ENCODE measurements at regions of chr15 and their contacts with region 1.

Region 1: DNA sequence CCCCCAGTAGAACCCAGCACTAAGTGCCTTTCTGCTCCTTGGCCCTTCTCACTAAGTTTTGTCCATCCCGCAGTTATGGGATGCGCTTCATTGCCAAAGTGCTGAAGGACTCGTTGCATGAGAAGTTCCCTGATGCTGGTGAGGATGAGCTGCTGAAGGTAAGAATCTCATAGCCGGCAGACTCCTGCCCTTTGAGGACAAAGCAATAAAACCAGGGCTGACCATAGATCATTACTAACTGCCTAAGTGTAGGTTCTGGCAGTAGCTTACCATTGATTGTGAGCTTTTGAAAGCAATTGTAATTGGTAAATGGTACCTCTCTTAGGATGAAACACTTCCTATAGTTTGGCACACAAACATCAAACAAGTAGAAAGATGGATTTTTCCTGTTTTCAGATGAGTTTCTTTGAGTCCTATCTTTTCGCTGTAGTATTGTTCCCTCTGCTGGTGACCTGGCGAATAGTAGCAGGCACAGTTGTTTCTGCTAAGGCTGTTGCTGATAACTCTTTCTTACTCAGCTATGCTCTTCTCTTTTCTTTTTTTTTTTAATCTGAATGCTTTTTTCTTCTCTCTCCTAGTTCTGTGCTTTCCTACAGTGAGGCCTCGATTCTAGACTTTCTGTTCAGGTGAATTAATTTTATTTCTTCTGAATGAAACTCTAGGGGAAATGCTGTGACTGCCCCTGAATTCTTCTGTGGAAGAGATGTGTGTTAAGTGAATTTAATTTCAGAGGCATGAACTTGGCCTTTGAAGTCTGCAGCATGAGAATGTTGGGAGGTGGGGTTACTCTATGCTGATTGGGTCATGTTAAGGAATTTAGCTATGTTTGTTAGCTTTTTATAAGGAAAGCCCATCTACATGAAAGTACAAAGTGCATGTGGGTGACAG is 47.4 kb upstream of the CRTC3 start:
- H3K4me3 ChIP-seq: no peak overlapping the region
- H3K27ac ChIP-seq: no peak overlapping the region
- H3K4me1 ChIP-seq: no peaks in the 10 kb centered on the region
- CTCF ChIP-seq: peak; percentile 80

Region 2: GRCh38 chr15:90300988-90301706 is 181.2 kb before region 1 on chr15:
- CTCF ChIA-PET with region 1: interaction called, 16 read pairs
- POLR2A ChIA-PET with region 1: no interaction called
- H3K4me3 ChIP-seq: no peak overlapping the region
- H3K27ac ChIP-seq: no peak overlapping the region
- H3K4me1 ChIP-seq: no peaks in the 10 kb centered on the region
- CTCF ChIP-seq: peak; percentile 68

Region 3: GRCh38 chr15:90343302-90343790 is 139.0 kb before region 1 on chr15:
- CTCF ChIA-PET with region 1: interaction called, 10 read pairs
- POLR2A ChIA-PET with region 1: no interaction called
- H3K4me3 ChIP-seq: no peak overlapping the region
- H3K27ac ChIP-seq: no peak overlapping the region
- H3K4me1 ChIP-seq: peaks cover 4% of the 10 kb centered on the region; the same call in 1 of the 2 replicates
- CTCF ChIP-seq: no peak

Region 4: DNA sequence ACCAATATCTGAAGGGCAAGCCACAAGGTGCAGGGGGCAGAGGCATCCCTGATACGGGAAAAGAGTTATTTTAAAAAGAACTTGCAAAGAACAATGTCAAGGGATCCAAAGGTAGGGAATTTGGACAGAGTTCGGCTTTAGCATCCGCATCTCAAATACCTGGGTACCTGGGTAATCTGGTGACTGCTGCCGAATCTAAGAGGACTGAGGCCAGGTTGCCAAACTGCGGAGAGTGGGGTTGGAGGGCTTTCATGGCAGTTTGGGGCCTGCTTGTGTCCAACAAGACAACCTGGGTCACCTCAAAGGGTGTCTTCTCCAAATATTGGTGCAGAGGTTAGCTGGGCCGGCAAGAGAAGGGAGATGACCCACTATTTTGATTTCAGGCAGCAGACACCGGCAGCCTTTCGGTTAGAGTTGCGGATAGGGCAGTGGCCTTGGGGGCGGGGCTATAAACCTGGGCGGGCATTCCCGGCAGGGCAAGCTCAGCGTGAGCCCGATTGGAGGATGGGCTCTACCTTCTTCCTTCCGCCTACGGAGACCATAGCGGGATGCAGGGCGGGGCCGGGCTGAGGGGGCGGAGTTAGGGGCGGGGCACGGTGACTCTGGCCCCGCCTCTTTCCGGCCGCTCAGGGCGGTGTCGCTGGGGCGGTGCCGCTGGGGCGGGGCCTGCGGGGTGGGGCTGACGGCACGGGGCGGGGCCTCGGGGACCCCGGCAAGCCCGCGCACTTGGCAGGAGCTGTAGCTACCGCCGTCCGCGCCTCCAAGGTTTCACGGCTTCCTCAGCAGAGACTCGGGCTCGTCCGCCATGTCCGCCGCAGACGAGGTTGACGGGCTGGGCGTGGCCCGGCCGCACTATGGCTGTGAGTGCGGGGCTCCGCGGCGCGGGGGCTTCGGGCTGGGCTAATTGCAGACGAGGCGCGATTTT is 94.6 kb before region 1 on chr15 and contains the start of gene IQGAP1:
- CTCF ChIA-PET with region 1: interaction called, 10 read pairs
- POLR2A ChIA-PET with region 1: interaction called, 5 read pairs
- H3K4me3 ChIP-seq: peak within 1 kb of the TSS; percentile 96
- H3K27ac ChIP-seq: peak within 1 kb of the TSS; percentile 77
- H3K4me1 ChIP-seq: peaks cover 15% of the 10 kb centered on the region
- CTCF ChIP-seq: no peak

Region 5: GRCh38 chr15:90425726-90426346 is 56.5 kb before region 1 on chr15:
- CTCF ChIA-PET with region 1: interaction called, 10 read pairs
- POLR2A ChIA-PET with region 1: no interaction called
- H3K4me3 ChIP-seq: no peak overlapping the region
- H3K27ac ChIP-seq: no peak overlapping the region
- H3K4me1 ChIP-seq: peaks cover 12% of the 10 kb centered on the region; the same call in 1 of the 2 replicates
- CTCF ChIP-seq: no peak

Region 6: DNA sequence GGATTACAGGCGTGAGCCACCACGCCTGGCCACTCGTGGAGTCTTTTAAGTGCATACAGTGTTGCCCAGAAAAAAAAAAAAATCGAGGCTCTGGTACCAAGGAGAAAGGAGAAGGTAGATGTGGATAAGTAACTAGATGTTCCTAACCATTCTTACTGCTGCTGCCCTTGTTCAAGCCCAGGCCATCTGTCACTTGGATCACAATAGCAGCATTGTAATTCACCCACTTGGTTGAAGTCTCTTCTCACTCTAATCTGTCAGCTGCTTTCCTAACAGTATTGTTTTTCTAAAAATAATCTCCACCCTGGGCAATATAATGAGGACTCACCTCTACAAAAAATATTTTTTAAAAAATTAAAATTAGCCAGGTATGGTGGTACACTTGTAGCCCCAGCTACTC is 10.6 kb before region 1 on chr15:
- CTCF ChIA-PET with region 1: interaction called, 44 read pairs
- POLR2A ChIA-PET with region 1: no interaction called
- H3K4me3 ChIP-seq: no peak overlapping the region
- H3K27ac ChIP-seq: no peak overlapping the region
- H3K4me1 ChIP-seq: no peaks in the 10 kb centered on the region
- CTCF ChIP-seq: no peak

Measured in HEK293 (cell line).